ENCODE measurements at regions of chrX and their contacts with region 1.

Region 1: GRCh38 chrX:108199691-108200090 is 108.1 kb downstream of the ATG4A start:
- DNase-seq: no peak
- ATAC-seq: no peak

Region 2: GRCh38 chrX:108558217-108558616 is 358.5 kb after region 1 on chrX:
- intact Hi-C with region 1: loop called in 1 of 2 experiments (anchors 10 kb)
- DNase-seq: no peak
- ATAC-seq: no peak

Region 3: GRCh38 chrX:109475174-109475891 is 1275.6 kb after region 1 on chrX:
- intact Hi-C with region 1: loop called in 1 of 2 experiments (anchors 10 kb)
- DNase-seq: peak; percentile 26
- ATAC-seq: peak; percentile 57 to 78